IMR-90 (cell line): ENCODE measurements at regions of chr20 and their contacts with region 1.

Region 1: GRCh38 chr20:47024461-47024937 is 129.9 kb downstream of the EYA2 start:
- DNase-seq: peak; percentile 77
- ATAC-seq: peak; percentile 77
- H3K4me3 ChIP-seq: no peak overlapping the region
- H3K27ac ChIP-seq: peak overlapping the region; percentile 34; the same call in 1 of the 2 replicates
- H3K4me1 ChIP-seq: peaks cover 11% of the 10 kb centered on the region; the same call in 1 of the 2 replicates
- H3K27me3 ChIP-seq: no peaks in the 10 kb centered on the region
- CTCF ChIP-seq: no peak
- POLR2A ChIP-seq: no peak
- RAD21 ChIP-seq: no peak

Region 2: DNA sequence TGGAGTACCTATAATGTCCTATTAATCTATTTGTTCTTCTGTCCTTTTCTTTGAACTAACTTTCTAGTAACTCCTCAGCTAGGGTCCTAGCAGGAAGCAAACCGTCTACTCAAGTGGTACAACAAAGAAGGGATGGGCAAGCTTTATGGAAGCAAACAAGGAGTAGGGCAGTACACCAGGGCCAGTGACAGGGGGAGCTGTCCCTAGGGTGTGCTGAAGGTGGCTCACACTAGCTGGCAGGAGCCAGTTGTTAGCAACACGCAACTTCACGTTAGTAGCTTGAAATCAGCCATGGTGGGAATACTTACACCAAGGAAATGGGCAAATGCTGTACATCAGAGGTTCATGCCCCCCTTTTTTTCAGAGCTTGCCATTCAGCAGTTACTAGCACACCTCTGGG is 203.8 kb before region 1 on chr20:
- CTCF ChIA-PET with region 1: no interaction called
- POLR2A ChIA-PET with region 1: no interaction called
- dilution Hi-C with region 1: no loop called
- in situ Hi-C with region 1: no loop called
- intact Hi-C with region 1: no loop called
- DNase-seq: no peak
- ATAC-seq: no peak
- H3K4me3 ChIP-seq: no peak overlapping the region
- H3K27ac ChIP-seq: no peak overlapping the region
- H3K4me1 ChIP-seq: peaks cover under 1% of the 10 kb centered on the region; the same call in 1 of the 2 replicates
- H3K27me3 ChIP-seq: no peaks in the 10 kb centered on the region
- CTCF ChIP-seq: no peak
- POLR2A ChIP-seq: no peak
- RAD21 ChIP-seq: no peak

Region 3: GRCh38 chr20:46894971-46895905 is 129.3 kb before region 1 on chr20:
- CTCF ChIA-PET with region 1: no interaction called
- POLR2A ChIA-PET with region 1: no interaction called
- dilution Hi-C with region 1: no loop called
- in situ Hi-C with region 1: no loop called
- intact Hi-C with region 1: loop called (anchors 10 kb)
- DNase-seq: peak; percentile 68
- ATAC-seq: peak; percentile 50
- H3K4me3 ChIP-seq: peak overlapping the region; percentile 83
- H3K27ac ChIP-seq: peak overlapping the region; percentile 6
- H3K4me1 ChIP-seq: 0 out of 2 replicates have a peak, but pooled peaks cover 2% of the 10 kb centered on the region
- H3K27me3 ChIP-seq: no peaks in the 10 kb centered on the region
- CTCF ChIP-seq: no peak
- POLR2A ChIP-seq: no peak
- RAD21 ChIP-seq: peak; percentile 9; the same call in 1 of the 2 replicates

Region 4: DNA sequence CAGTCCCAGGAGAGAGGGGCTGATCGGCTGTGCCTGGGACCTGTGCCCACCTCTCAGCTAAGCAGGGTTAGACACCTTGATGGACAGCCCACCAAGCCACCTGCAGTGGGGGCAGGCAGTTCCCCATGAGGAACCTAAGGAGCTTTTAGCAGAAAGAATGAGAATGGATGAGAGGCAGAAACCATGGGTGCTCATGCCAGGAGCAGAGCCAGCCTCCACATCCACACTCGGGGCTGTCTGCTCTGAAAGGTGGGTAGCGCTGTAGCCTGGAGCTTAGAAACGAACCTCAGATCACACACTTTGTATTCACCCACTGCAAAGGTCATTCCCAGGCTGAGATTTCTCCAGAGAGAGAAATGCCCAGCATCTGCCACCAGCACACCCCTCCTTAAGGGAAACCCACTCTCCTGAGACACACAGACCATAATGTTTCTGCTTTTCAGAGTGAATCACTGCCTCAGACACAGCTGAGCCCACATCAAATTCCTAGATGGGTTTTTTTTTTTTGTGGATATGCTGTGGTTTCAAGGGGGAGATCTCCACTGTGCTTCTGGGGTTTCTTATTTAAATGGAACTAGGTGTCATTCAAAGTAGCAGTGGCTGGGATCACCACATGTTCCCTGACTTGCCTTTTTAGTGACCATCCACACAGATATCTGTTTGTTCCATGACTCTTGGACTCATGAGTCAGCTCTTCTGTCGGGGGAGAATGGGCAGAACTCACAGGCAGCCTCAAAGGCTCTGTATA is 89.0 kb after region 1 on chr20:
- CTCF ChIA-PET with region 1: no interaction called
- POLR2A ChIA-PET with region 1: interaction called, 3 read pairs
- dilution Hi-C with region 1: no loop called
- in situ Hi-C with region 1: no loop called
- intact Hi-C with region 1: loop called (anchors 10 kb)
- DNase-seq: peak; percentile 76
- ATAC-seq: peak; percentile 63
- H3K4me3 ChIP-seq: no peak overlapping the region
- H3K27ac ChIP-seq: no peak overlapping the region
- H3K4me1 ChIP-seq: peaks cover 19% of the 10 kb centered on the region
- H3K27me3 ChIP-seq: no peaks in the 10 kb centered on the region
- CTCF ChIP-seq: no peak
- POLR2A ChIP-seq: no peak
- RAD21 ChIP-seq: no peak